ENCODE measurements at regions of chr20 and their contacts with region 1.

Region 1: DNA sequence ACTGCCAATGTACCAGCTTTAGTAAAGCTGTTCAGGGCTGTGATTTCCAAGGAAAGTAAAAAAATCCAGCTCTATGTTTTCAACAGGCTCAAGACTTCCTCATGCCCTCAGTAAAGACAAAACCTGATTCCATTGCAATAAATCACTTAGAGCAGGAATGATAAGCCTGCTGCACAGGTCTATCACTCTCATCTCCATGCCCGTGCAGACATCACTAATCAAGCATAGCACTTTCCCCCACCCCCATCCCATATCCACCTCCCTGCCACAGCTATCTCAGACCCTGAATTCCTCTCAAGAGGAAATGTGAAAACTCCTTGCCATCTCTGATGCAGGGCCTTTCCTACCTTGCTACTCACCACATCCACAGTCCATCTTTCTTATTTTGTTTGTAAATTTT is 554.9 kb downstream of the MAFB start:
- DNase-seq: no peak
- CTCF ChIP-seq: no peak

Region 2: DNA sequence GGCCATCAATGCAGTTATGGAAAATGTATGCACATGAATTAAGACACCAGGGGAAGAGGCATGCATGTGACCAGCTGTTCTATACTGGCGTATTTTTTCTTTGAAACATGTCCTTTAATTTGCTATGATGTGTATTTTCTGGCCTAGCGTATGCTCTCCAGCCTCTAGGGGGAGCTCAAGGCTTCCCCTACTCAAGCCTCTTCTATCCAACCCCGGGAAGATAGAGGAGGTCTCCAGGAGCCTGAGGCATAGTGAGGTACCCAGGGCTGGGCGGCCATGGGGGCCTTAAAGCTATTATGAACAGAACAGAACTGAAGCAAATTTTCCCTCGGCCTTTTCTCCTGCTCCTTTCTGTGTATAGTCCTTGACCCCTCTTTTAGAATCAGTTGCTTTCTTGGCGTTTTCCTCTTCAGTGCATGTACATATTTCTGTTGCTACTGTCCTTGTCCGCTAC is 25.9 kb after region 1 on chr20:
- CTCF ChIA-PET with region 1: interaction called, 14 read pairs
- POLR2A ChIA-PET with region 1: no interaction called
- DNase-seq: peak; percentile 24
- CTCF ChIP-seq: peak; percentile 50